ENCODE measurements at regions of chr15 and their contacts with region 1.

Region 1: GRCh38 chr15:41416742-41417406 is at the start of gene RTF1:
- DNase-seq: peak; percentile 96
- H3K4me3 ChIP-seq: peak within 1 kb of the TSS; percentile 59 to 100 (median 92)
- H3K27ac ChIP-seq: peak within 1 kb of the TSS; percentile 86 to 94 (median 91)
- H3K4me1 ChIP-seq: peaks cover 0 to 45% (median 28%) of the 10 kb centered on the region in 4 donors
- H3K27me3 ChIP-seq: no peaks in the 10 kb centered on the region
- CTCF ChIP-seq: no peak
- EP300 ChIP-seq: no peak
- POLR2A ChIP-seq: peak in 1 of 2 donors; percentile 19
- total RNA-seq, gene RTF1: 30.5 to 35.7 (median 32.2) TPM

Region 2: GRCh38 chr15:41230650-41231533 is 186.0 kb before region 1 on chr15 and contains the starts of genes CHP1 and EXD1:
- intact Hi-C with region 1: loop called (anchors 5 kb)
- DNase-seq: peak; percentile 99
- H3K4me3 ChIP-seq: peak within 1 kb of the TSS; percentile 75 to 78 (median 78)
- H3K27ac ChIP-seq: peak within 1 kb of the TSS; percentile 91 to 93 (median 91)
- H3K4me1 ChIP-seq: peaks cover 0 to 32% (median 30%) of the 10 kb centered on the region in 4 donors
- H3K27me3 ChIP-seq: no peaks in the 10 kb centered on the region
- CTCF ChIP-seq: peak; percentile 90 to 98 (median 96)
- EP300 ChIP-seq: peak in 2 of 4 donors; percentile 6 to 37
- POLR2A ChIP-seq: peak; percentile 85 to 86
- total RNA-seq, gene CHP1: 101 to 118 (median 105) TPM
- total RNA-seq, gene EXD1: not detected

Region 3: DNA sequence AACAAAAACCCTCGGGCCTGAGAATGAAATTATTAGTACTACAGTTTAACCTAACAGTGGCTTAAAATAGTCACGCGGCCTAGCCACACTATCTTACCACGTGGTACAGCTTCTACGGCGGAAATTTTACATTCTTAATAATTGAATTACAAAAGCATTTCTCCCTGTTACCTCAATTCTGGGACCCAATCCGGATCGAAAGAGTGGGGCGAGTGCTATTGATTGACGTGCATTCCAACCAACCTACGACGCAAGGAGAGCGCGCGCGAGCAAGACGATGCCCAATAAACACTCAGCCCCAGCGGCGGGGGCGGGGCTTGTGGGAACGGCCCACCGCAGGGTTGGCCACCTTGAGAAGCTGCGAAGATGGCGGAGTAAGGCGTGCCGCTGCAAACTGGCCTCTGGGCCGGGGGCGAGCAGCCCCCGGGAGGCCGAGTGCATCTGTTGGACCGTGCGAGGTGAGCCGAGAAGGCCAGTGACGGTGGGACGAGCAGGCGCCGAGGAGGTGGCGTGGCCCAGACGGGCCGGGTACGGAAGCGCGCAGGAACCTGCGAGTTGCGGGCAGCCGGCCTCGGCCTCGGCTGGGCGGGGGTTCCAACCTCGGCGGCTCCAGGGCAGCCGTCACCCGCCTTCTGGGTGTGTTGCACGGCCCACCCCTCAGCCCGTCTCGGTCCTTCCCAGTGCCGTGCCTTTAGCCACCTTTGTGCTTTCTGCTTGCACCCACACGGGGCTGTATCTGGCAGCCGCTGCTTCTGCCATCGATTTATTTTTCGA is 133.0 kb before region 1 on chr15:
- intact Hi-C with region 1: loop called (anchors 5 kb)
- DNase-seq: peak; percentile 99
- H3K4me3 ChIP-seq: peak overlapping the region; percentile 80 to 98 (median 92)
- H3K27ac ChIP-seq: peak overlapping the region; percentile 90 to 96 (median 92)
- H3K4me1 ChIP-seq: peaks cover 0 to 29% (median 22%) of the 10 kb centered on the region in 4 donors
- H3K27me3 ChIP-seq: no peaks in the 10 kb centered on the region
- CTCF ChIP-seq: no peak
- EP300 ChIP-seq: peak in 1 of 4 donors; percentile 9
- POLR2A ChIP-seq: peak; percentile 82 to 90

Region 4: DNA sequence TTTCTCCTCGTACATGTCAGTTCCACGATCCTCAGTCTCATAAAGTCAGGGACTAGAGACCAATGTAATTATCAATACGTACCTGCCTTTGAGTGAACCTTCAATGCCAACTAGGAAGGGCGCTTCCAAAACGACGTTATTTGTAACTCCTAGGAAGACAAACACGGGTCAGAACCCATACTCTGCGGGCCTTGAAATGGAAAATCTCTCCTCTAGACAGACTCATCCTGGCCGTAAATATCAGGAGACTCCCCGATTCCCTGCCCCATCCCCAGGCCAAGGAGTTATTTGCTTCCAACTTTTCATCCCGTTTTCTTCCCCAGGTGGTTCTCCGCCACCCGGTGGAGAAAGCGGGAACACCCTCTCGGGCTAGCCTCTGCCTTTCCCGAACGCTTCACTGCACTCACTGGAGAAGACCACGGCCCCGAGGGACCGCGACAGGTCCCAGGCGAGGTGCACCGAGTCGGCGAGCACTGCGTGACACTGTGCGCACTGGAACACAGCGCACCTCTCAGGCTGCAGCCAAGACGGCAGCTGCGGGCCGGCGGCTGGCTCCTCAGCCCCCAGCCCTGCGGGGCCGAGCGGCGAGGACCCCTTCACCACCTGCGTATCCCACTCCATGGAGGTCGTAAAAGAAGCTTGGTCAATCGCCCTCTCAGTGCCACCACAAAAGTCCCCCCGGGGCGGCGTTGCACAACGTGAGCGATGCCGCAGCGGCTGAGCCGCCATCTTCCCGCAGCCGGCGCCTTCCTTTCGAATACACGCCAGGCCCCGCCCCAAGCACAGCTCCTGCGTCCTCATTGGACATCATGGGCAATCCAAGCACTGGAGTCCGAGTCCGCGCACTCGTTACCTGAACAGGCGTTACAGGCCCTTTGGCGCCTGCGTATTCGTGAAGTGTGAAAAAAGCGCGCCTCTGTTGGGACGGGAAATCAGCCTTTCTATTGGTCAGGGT is 84.8 kb before region 1 on chr15 and contains the start of gene OIP5:
- intact Hi-C with region 1: loop called (anchors 10 kb)
- DNase-seq: peak; percentile 99
- H3K4me3 ChIP-seq: peak within 1 kb of the TSS; percentile 71 to 93 (median 74)
- H3K27ac ChIP-seq: peak within 1 kb of the TSS; percentile 59 to 77 (median 74)
- H3K4me1 ChIP-seq: peaks cover 0 to 17% (median 14%) of the 10 kb centered on the region in 4 donors
- H3K27me3 ChIP-seq: no peaks in the 10 kb centered on the region
- CTCF ChIP-seq: peak; percentile 24 to 85 (median 74)
- EP300 ChIP-seq: no peak
- POLR2A ChIP-seq: no peak
- total RNA-seq, gene OIP5: 0.71 to 1.1 TPM in 2 of 4 donors, not detected in the others

Region 5: GRCh38 chr15:41401904-41402267 is 15.0 kb before region 1 on chr15:
- intact Hi-C with region 1: loop called (anchors 2 kb)
- DNase-seq: no peak
- H3K4me3 ChIP-seq: peak overlapping the region; percentile 71 to 90 (median 87)
- H3K27ac ChIP-seq: peak overlapping the region; percentile 80 to 87 (median 86)
- H3K4me1 ChIP-seq: peaks cover 3 to 19% (median 9%) of the 10 kb centered on the region in 4 donors
- H3K27me3 ChIP-seq: no peaks in the 10 kb centered on the region
- CTCF ChIP-seq: no peak
- EP300 ChIP-seq: no peak
- POLR2A ChIP-seq: no peak

Measured in sigmoid colon (tissue), 7 donors.